K562 (cell line): ENCODE measurements at regions of chr4 and their contacts with region 1.

Region 1: GRCh38 chr4:87235020-87235671 is 14.7 kb upstream of the KLHL8 start:
- DNase-seq: no peak
- ATAC-seq: peak; percentile 18; the same call in 2 of the 3 replicates
- H3K4me3 ChIP-seq: peak overlapping the region; percentile 35
- H3K27ac ChIP-seq: no peak overlapping the region; the same call in 2 of the 3 replicates
- H3K4me1 ChIP-seq: peaks cover 0 to 3% of the 10 kb centered on the region in 2 experiments; a peak in 1 of 5 replicates
- H3K27me3 ChIP-seq: no peaks in the 10 kb centered on the region; a peak in 1 of 5 replicates
- CTCF ChIP-seq: no peak
- EP300 ChIP-seq: no peak
- POLR2A ChIP-seq: no peak
- RAD21 ChIP-seq: no peak

Region 2: DNA sequence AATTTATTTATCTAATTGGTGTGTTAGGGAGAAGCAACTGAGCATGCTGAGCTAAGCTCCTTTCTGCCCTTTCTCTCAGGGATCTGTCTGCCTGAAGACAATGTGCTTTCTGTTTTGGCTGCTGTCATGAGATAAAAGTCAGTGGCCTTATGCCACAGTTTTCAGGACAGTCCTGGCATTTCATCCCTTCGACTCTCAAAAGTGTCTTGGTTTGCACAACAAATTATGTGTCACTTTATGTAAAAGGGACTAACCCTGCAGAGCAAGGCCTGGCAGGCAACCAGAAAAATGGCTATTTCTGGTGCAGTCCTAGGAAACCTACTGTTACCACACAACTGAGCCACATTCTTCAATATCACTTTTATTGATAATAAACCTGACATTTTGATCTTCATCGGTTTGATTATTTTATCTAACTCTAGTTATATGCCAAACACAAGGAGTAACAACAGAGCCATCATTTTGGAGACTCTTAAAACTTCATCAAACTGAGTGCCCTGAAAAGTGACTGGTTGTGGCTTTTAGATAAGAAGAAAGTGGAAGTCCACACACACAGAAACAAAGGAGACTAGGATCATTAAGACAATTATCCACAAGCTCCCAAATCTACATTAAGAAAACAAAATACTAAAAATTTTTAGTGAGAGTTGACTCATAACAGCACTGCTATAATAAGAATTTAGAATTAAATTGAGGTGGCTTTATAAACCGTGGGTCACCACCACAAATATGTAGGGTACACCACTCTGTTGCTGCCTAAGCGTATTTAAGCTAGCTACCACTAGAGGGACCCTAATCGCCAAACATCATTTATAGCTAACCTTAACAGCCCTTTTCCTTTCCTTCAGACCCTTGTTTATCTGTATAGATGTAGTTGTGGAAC is 736.9 kb before region 1 on chr4:
- CTCF ChIA-PET with region 1: no interaction called
- POLR2A ChIA-PET with region 1: no interaction called
- in situ Hi-C with region 1: no loop called
- intact Hi-C with region 1: loop called (anchors 5 kb)
- DNase-seq: peak; percentile 34 to 52 (median 47)
- ATAC-seq: peak; percentile 91
- H3K4me3 ChIP-seq: no peak overlapping the region
- H3K27ac ChIP-seq: no peak overlapping the region
- H3K4me1 ChIP-seq: no peaks in the 10 kb centered on the region
- H3K27me3 ChIP-seq: no peaks in the 10 kb centered on the region
- CTCF ChIP-seq: peak; percentile 49 to 72 (median 62)
- EP300 ChIP-seq: no peak
- POLR2A ChIP-seq: no peak
- RAD21 ChIP-seq: peak; percentile 35 to 52; a peak in 3 of 4 replicates

Region 3: DNA sequence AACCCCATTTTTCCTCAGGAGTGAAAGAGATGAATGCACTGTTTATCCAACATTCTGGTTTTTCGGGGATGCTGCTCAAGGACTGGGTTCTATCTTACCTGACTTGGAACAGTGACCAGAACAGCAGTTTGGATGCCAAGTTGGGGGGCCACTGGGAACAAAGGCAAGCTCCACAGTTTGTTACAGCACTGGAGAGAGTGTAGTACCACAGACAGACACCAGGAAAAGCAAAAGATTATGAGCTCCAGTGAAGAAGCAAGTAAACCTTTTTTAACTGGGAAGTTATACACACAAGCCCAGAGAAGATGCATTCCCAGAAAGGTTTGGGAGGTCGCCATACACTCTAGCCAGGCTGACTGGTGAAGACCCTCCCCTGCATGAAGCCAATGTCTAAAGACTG is 356.5 kb before region 1 on chr4:
- CTCF ChIA-PET with region 1: no interaction called
- POLR2A ChIA-PET with region 1: no interaction called
- in situ Hi-C with region 1: no loop called
- intact Hi-C with region 1: no loop called
- DNase-seq: no peak
- ATAC-seq: no peak
- H3K4me3 ChIP-seq: no peak overlapping the region
- H3K27ac ChIP-seq: no peak overlapping the region
- H3K4me1 ChIP-seq: no peaks in the 10 kb centered on the region
- H3K27me3 ChIP-seq: peaks cover 3% of the 10 kb centered on the region in 2 experiments; a peak in 1 of 5 replicates
- CTCF ChIP-seq: no peak
- EP300 ChIP-seq: no peak
- POLR2A ChIP-seq: no peak
- RAD21 ChIP-seq: no peak

Region 4: DNA sequence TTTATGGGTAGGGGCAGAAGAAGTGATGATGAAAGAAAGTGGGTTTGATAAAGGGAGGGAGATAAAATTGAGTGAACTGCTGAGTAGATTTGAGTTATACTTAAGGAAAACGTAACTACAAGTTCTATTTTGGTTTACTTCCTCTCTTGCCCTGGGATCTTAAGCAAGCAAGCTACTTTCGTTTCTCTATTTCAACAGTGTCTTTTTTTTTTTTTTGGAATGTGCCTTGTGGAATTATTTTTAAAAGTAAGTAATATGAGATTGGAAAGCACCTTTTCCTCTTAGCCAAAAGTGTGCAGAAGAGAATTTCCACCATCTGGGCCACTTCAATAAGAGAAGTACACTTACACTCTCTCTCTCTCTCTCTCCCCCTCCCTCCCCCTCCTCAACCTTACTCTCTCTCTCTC is 326.9 kb before region 1 on chr4:
- CTCF ChIA-PET with region 1: no interaction called
- POLR2A ChIA-PET with region 1: no interaction called
- in situ Hi-C with region 1: loop called (anchors 10 kb)
- intact Hi-C with region 1: no loop called
- DNase-seq: no peak
- ATAC-seq: no peak
- H3K4me3 ChIP-seq: no peak overlapping the region
- H3K27ac ChIP-seq: no peak overlapping the region
- H3K4me1 ChIP-seq: peaks cover 5 to 10% of the 10 kb centered on the region in 2 experiments; a peak in 3 of 5 replicates
- H3K27me3 ChIP-seq: no peaks in the 10 kb centered on the region
- CTCF ChIP-seq: no peak
- EP300 ChIP-seq: no peak
- POLR2A ChIP-seq: no peak
- RAD21 ChIP-seq: no peak

Region 5: DNA sequence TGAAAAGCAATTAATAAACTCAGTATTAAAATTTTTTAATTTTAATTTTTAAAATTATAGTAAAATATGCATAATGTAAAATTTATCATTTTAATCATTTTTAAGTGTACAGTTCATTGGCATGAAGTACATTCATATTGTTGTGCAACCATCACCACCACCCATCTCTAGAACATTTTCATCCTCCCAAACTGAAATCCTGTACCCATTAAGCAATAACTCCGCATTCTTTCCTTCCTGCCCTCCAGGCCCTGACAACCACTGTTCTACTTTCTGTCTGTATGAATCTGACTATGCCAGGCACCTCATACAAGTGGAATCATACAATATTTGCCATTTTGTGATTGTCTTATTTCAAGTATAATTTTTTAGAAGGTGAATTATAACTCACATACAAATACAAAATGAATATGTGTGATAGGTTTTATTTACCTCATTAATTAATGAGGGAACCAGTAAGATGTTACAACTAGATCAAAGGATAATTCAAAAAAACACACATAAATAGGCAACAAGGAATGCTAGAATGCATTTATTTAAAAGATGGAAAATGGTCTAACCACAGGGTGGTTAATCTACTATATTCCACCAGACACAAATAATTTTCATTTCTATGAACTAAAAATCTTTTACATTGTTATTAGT is 313.4 kb before region 1 on chr4:
- CTCF ChIA-PET with region 1: interaction called, 4 read pairs
- POLR2A ChIA-PET with region 1: no interaction called
- in situ Hi-C with region 1: no loop called
- intact Hi-C with region 1: loop called (anchors 1 kb)
- DNase-seq: no peak
- ATAC-seq: no peak
- H3K4me3 ChIP-seq: no peak overlapping the region
- H3K27ac ChIP-seq: no peak overlapping the region
- H3K4me1 ChIP-seq: peaks cover 10 to 17% of the 10 kb centered on the region in 2 experiments; a peak in 4 of 5 replicates
- H3K27me3 ChIP-seq: no peaks in the 10 kb centered on the region
- CTCF ChIP-seq: no peak
- EP300 ChIP-seq: no peak
- POLR2A ChIP-seq: no peak
- RAD21 ChIP-seq: no peak

Region 6: DNA sequence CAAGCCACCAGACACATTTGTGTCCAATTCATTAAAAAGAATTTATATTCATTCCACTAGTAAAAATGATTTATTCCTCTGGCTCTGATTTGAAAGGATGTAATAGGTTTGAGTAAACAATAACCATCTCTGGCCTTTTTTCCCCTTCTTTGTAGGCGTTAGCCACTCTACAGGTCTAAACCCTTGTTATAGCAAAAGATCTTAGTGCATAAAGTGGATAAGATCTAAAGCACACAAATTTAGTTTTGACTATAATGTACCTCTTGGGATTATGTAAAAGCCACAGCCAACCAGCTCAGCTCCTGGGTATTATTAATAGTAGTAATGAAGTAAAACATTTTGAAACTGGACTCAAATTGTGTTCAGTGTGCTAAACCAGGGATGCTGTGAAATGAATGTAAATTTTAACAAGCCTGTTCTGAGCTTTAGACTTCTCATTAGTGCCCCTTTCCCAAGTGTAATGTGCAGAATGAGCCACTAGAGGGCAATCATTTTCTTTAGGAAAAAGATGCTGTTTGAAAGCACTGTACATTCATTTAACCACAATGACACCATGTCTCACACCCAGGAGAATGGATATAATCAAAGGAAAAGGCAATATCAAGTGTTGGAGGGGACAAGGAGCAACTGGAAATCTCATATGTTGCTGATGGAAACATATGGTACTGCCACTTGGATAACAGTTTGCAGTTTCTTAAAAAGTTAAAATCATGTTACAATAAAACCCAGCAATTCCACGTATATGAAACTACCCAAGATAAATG is 84.5 kb before region 1 on chr4:
- CTCF ChIA-PET with region 1: interaction called, 23 read pairs
- POLR2A ChIA-PET with region 1: no interaction called
- in situ Hi-C with region 1: loop called (anchors 5 kb)
- intact Hi-C with region 1: loop called (anchors 1 kb)
- DNase-seq: peak; percentile 51 to 79 (median 54)
- ATAC-seq: peak; percentile 89
- H3K4me3 ChIP-seq: no peak overlapping the region
- H3K27ac ChIP-seq: no peak overlapping the region
- H3K4me1 ChIP-seq: no peaks in the 10 kb centered on the region
- H3K27me3 ChIP-seq: no peaks in the 10 kb centered on the region
- CTCF ChIP-seq: peak; percentile 72 to 93 (median 85)
- EP300 ChIP-seq: no peak
- POLR2A ChIP-seq: no peak
- RAD21 ChIP-seq: peak; percentile 81 to 90

Region 7: GRCh38 chr4:87251106-87251505 is 16.0 kb after region 1 on chr4:
- CTCF ChIA-PET with region 1: no interaction called
- POLR2A ChIA-PET with region 1: no interaction called
- in situ Hi-C with region 1: no loop called
- intact Hi-C with region 1: no loop called
- DNase-seq: no peak
- ATAC-seq: no peak
- H3K4me3 ChIP-seq: no peak overlapping the region
- H3K27ac ChIP-seq: no peak overlapping the region
- H3K4me1 ChIP-seq: no peaks in the 10 kb centered on the region
- H3K27me3 ChIP-seq: no peaks in the 10 kb centered on the region; a peak in 1 of 5 replicates
- CTCF ChIP-seq: no peak
- EP300 ChIP-seq: no peak
- POLR2A ChIP-seq: no peak
- RAD21 ChIP-seq: no peak